SK-N-SH (cell line): ENCODE measurements at regions of chr9 and their contacts with region 1.

Region 1: DNA sequence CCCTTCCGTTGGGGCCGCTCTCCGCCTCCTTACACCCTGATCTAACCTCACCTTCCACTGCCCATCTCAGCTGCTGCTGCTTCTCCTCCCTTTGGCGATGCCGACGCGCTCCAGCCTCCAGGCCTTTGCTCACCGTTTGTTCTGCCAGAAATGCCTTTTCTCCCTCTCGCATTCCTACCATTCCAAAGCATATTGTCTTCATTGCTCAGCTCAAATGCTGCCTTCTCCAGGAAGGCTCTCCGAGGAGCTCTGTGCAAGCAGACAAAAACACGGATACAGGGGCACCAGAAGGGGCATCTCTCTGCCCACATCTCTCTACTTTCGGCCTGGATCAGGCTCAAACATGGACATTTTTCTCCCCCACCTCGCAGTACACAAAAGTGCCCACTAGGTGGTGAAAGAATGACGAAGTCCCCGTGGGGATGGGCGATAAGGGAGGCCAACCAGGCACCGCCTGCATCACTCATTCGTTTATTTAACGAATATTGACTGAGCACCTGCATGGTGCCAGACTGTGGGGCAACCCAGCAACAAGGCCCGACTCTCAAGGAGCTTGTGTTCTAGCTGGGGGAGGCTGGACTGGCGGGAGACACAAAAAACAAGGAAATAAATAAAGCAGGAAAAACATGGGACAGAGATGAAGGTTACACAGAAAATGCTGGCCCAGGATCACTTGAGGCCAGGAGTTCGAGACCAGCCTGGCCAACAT is 7.3 kb upstream of the GRHPR start:
- DNase-seq: peak; percentile 87
- H3K4me3 ChIP-seq: peak overlapping the region in 1 of 2 experiments; percentile 36; a peak in 1 of 4 replicates
- H3K27ac ChIP-seq: peak overlapping the region; percentile 23 to 40; a peak in 2 of 4 replicates
- H3K4me1 ChIP-seq: peaks cover 0 to 4% of the 10 kb centered on the region in 2 experiments; a peak in 2 of 4 replicates
- H3K27me3 ChIP-seq: no peaks in the 10 kb centered on the region
- CTCF ChIP-seq: peak; percentile 78
- EP300 ChIP-seq: no peak
- RAD21 ChIP-seq: peak; percentile 73

Region 2: DNA sequence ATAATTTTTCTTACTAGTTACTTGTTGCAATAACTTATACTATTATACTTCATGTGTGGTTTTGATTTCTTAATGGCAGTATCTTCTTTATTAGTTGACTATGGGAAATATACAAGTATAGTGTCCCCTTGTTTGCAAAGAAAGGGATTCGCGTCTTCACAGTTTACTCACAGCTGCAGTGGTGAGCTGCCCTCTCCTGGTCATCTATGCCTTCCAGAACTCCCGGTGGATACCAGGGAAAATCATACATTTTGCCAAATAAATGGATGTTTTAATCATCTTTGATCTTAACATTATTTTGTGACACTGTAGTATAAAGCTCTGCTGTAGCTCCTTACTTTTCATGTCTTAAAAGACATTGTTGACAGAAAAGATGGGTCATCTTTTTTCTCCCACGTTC is 152.8 kb before region 1 on chr9:
- CTCF ChIA-PET with region 1: no interaction called
- POLR2A ChIA-PET with region 1: no interaction called
- DNase-seq: peak; percentile 30
- H3K4me3 ChIP-seq: no peak overlapping the region; a peak in 1 of 4 replicates
- H3K27ac ChIP-seq: no peak overlapping the region
- H3K4me1 ChIP-seq: peaks cover 0 to 2% of the 10 kb centered on the region in 2 experiments; a peak in 1 of 4 replicates
- H3K27me3 ChIP-seq: no peaks in the 10 kb centered on the region
- CTCF ChIP-seq: peak; percentile 69
- EP300 ChIP-seq: no peak
- RAD21 ChIP-seq: peak; percentile 87

Region 3: DNA sequence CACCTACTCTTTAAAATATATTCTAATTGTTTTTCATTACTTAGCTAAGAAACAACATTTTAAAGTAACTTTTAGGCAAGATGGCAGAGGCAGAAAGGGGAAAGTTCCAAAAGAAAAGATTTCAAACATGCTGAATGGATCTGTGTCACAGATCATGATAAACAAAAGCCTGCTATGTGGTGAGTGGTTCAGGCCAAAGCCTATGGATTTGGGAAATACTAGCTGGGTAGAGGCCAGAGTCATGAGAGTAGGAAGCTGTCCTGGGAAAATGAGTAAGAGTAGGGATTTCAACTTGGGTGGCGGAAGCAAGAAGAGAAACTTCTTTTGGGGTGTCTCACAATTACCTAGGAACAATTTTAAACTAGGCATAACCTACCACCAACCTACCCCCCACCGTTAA is 61.4 kb before region 1 on chr9:
- CTCF ChIA-PET with region 1: no interaction called
- POLR2A ChIA-PET with region 1: no interaction called
- DNase-seq: no peak
- H3K4me3 ChIP-seq: no peak overlapping the region
- H3K27ac ChIP-seq: no peak overlapping the region
- H3K4me1 ChIP-seq: no peaks in the 10 kb centered on the region
- H3K27me3 ChIP-seq: no peaks in the 10 kb centered on the region
- CTCF ChIP-seq: no peak
- EP300 ChIP-seq: no peak
- RAD21 ChIP-seq: no peak

Region 4: DNA sequence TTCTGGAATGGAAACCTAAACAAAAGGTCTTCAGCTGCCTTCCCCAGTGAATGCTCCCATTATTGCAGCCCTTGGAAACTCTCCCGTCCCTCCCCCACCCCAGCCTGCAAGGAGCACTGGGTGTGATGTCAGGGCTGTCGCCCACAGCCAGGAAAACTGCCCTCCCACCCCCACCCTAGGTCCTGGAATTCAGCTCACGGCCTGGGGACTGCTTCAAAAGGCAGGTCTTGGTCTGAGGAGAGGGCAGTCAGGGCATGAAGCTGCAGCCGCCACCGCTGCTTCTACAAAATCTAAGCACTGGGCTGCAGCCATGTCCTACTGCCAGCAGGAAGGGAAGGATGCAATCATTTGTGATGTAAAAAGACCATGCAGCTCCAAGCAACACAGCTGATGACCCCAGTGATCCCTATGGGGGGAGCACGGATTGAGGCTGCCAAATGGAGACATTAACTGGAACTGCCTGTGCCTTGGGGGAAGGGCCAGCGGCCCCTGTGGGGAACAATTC is 18.8 kb after region 1 on chr9:
- CTCF ChIA-PET with region 1: interaction called, 13 read pairs
- POLR2A ChIA-PET with region 1: no interaction called
- DNase-seq: no peak
- H3K4me3 ChIP-seq: no peak overlapping the region
- H3K27ac ChIP-seq: no peak overlapping the region
- H3K4me1 ChIP-seq: peaks cover 0 to 2% of the 10 kb centered on the region in 2 experiments; a peak in 1 of 4 replicates
- H3K27me3 ChIP-seq: no peaks in the 10 kb centered on the region
- CTCF ChIP-seq: no peak
- EP300 ChIP-seq: no peak
- RAD21 ChIP-seq: no peak

Region 5: DNA sequence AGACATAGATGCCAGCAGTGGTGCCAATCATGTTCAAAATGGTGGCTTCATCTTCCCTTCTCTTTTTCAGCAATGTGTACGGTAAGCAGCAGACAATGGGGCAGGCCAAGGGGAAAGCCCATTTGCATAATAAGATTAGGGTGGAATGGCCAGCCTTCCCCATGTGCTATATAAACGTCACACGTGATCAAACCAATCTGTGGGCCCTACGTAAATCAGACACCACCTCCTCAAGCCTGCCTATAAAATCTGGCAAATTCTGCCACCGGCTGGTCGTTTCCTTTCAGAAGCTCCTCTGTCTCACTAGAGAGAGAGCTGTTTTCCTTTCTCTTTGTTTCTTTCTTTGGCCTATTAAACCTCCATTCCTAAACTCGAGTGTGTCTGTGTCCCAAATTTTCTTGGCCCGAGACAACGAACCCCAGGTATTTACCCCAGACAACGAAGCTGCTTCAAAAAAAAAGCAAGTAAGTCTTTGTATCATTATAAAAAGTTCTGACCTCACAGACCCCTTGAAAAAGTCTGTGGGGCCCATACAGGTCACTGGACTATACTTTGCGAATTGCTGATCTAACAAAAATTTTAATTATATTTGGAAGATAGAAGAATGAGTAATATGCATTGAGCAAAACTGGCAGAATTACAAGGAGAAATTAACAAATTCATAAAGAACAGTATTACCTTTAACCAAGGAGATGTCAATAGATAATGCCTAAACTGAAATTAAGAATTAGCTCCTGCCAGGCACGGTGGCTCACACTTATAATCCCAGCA is 34.9 kb after region 1 on chr9:
- CTCF ChIA-PET with region 1: no interaction called
- POLR2A ChIA-PET with region 1: no interaction called
- DNase-seq: no peak
- H3K4me3 ChIP-seq: no peak overlapping the region
- H3K27ac ChIP-seq: no peak overlapping the region
- H3K4me1 ChIP-seq: peaks cover 4 to 8% of the 10 kb centered on the region in 2 experiments; a peak in 2 of 4 replicates
- H3K27me3 ChIP-seq: no peaks in the 10 kb centered on the region
- CTCF ChIP-seq: no peak
- EP300 ChIP-seq: no peak
- RAD21 ChIP-seq: no peak